ENCODE measurements at regions of chr5 and their contacts with region 1.

Region 1: GRCh38 chr5:172361566-172362238 is 78.1 kb upstream of the UBTD2 start:
- DNase-seq: peak; percentile 81 to 98
- H3K4me3 ChIP-seq: no peak overlapping the region; the same call in 1 of the 2 replicates
- H3K27ac ChIP-seq: peak overlapping the region; percentile 97
- H3K4me1 ChIP-seq: peaks cover 28% of the 10 kb centered on the region
- H3K27me3 ChIP-seq: no peaks in the 10 kb centered on the region
- CTCF ChIP-seq: no peak

Region 2: GRCh38 chr5:172223901-172224873 is 137.5 kb before region 1 on chr5:
- CTCF ChIA-PET with region 1: interaction called, 13 read pairs
- POLR2A ChIA-PET with region 1: no interaction called
- intact Hi-C with region 1: no loop called
- DNase-seq: no peak
- H3K4me3 ChIP-seq: no peak overlapping the region
- H3K27ac ChIP-seq: no peak overlapping the region
- H3K4me1 ChIP-seq: no peaks in the 10 kb centered on the region
- H3K27me3 ChIP-seq: no peaks in the 10 kb centered on the region
- CTCF ChIP-seq: no peak

Region 3: DNA sequence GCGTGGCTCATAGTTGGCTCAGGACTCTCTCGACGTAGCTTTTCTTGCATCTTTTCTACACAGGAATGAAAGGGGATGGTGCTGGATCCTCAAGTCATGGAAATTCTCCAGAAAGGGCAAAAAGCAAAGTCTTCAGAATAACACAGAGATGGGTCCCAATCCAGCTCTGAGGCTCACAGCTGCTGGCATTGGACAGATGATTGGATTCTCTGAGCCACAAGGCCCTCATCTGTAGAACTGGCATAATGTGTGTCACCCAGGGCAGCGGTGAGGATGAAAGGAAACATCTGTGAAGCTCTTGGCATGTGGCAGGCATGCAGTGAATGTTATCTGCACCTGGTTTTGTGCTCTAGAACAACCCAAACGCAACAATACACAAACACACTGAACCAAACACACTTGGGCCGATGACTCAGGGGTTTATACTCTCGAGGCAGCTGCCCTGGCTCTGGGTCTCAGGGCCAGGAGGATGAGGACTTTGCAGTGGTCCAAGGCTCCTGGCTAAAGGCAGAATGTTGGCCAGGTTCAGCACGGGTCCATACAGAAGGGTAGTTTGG is 14.1 kb before region 1 on chr5:
- CTCF ChIA-PET with region 1: no interaction called
- POLR2A ChIA-PET with region 1: no interaction called
- intact Hi-C with region 1: no loop called
- DNase-seq: no peak
- H3K4me3 ChIP-seq: no peak overlapping the region
- H3K27ac ChIP-seq: no peak overlapping the region
- H3K4me1 ChIP-seq: no peaks in the 10 kb centered on the region
- H3K27me3 ChIP-seq: no peaks in the 10 kb centered on the region
- CTCF ChIP-seq: no peak